ENCODE measurements at regions of chr15 and their contacts with region 1.

Region 1: GRCh38 chr15:42920519-42921227 is at the start of gene TTBK2:
- DNase-seq: peak; percentile 98
- H3K4me3 Mint-ChIP-seq: peak within 1 kb of the TSS; percentile 99
- H3K27ac Mint-ChIP-seq: peak within 1 kb of the TSS; percentile 92
- H3K4me1 Mint-ChIP-seq: peaks cover 22% of the 10 kb centered on the region
- H3K27me3 Mint-ChIP-seq: no peaks in the 10 kb centered on the region
- total RNA-seq, gene TTBK2: 13.5 to 15.7 TPM

Region 2: DNA sequence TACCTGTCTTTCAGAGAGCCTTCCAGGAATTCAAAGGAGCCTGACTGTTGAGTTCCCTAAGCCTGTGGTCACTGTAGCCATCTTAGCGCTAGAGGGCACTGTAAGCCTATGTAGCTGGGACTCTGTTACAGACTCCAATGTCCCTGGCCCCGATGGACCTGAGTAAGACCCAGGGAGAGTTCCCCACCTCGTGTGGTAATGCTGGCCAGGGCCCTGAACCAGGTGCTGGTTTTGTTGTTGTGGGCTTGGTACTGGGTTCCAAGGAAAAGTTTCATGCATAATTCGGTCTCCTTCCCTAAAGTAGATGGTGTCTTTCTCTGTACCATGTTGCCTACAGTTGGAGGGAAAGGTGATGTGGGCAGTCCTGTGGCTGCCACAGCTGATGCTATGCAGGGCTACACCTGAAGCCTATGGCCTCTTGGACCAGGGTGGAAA is 216.2 kb before region 1 on chr15:
- CTCF ChIA-PET with region 1: interaction called, 8 read pairs
- intact Hi-C with region 1: loop called (anchors 1 kb)
- DNase-seq: peak; percentile 81
- H3K4me3 Mint-ChIP-seq: no peak overlapping the region
- H3K27ac Mint-ChIP-seq: no peak overlapping the region
- H3K4me1 Mint-ChIP-seq: peaks cover 6% of the 10 kb centered on the region
- H3K27me3 Mint-ChIP-seq: no peaks in the 10 kb centered on the region

Region 3: DNA sequence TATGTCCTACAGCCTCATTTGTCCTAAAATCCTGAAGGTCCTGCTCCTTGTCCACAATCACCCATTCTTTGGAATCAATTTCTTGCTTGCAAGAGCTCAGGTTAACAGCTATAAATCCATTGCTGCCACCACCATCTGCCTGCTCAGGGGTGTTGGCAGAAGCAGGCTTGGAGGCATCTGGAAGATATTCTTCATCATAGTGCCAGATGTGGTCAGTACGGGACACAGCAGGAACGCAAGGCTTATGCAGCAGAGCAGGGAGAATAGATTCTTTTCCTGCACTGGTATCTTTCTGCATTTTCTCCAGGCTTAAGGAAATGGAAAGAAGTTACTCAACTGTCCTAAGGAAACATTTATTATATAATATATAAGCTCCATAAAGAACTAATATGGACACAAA is 145.3 kb before region 1 on chr15:
- CTCF ChIA-PET with region 1: interaction called, 11 read pairs
- intact Hi-C with region 1: no loop called
- DNase-seq: no peak
- H3K4me3 Mint-ChIP-seq: no peak overlapping the region
- H3K27ac Mint-ChIP-seq: no peak overlapping the region
- H3K4me1 Mint-ChIP-seq: no peaks in the 10 kb centered on the region
- H3K27me3 Mint-ChIP-seq: no peaks in the 10 kb centered on the region

Region 4: DNA sequence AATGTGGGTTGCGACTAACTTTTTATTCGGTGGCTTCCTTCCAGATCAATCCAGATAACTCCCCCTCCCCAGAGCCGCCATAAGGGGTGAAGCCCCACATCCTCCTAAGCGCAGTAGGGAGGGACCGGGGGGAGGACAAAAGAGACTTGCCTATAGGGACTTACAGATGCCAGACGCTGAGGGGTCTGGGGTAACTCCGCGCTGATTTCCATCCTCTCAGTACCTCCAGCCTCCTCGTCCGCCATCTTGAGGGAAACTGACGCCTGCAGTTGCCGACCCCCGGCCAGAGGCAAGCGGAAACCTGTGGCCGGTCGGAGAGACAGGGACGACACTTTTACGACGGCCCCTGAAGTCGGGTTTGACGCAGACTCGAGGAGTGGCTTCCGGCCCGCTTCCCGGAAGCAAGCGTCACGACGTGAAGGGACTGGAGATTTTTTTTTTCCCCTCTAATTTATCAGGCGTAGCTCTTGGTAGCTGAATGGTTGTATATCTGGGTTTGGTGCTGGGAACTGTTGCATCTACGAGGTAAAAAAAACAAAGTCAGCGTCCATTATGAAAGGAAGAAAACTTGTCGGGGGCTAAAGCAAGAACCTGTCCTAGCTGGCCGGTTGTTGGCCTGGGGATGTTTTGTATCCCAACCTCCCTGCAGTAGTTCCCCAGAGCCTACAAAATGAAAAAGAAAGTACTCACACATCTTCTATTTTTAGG is 185.3 kb after region 1 on chr15 and contains the start of gene UBR1:
- CTCF ChIA-PET with region 1: no interaction called
- intact Hi-C with region 1: loop called (anchors 5 kb)
- DNase-seq: peak; percentile 95
- H3K4me3 Mint-ChIP-seq: peak within 1 kb of the TSS; percentile 95
- H3K27ac Mint-ChIP-seq: peak within 1 kb of the TSS; percentile 95
- H3K4me1 Mint-ChIP-seq: peaks cover 39% of the 10 kb centered on the region
- H3K27me3 Mint-ChIP-seq: no peaks in the 10 kb centered on the region
- total RNA-seq, gene UBR1: 25.2 to 25.9 TPM

Region 5: DNA sequence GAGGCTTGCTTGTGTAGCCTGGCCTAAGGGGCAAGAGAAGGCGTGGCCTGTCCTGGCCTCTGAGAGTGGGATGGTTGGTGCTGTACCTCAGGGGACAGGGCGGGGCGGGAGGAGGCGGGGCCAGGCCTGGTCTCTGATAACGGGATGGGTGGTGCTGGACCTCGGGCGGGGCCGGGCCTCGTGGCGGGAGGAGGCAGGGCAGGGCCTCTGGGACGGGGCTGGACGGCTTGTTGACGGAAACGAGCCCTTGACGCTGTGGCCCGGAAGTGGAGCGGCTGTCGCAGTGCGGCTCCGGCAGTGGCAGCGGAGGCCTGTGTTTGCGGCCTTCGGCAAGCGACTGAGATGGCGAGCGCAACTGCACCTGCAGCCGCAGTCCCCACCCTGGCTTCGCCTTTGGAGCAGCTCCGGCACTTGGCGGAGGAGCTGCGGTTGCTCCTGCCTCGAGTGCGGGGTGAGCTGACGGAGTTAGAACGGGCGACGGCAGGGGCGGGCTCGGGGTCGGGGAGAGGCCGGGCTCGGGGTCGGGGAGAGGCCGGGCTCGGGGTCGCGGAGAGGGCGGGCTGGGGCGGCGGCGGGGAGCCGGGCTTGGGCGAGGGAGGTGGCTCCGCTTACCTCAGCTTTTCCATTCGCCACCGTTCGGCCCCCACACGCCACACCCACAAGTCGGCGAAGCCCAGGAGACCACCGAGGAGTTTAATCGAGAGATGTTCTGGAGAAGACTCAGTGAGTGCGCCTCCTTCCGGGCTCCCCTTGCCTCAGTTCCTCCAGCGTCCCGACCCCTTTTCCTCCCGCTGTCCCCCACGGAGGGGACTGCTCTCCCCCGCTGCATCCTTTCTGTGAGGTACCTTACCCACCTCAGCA is 264.7 kb after region 1 on chr15 and contains the start of gene CCNDBP1:
- CTCF ChIA-PET with region 1: no interaction called
- intact Hi-C with region 1: loop called (anchors 1 kb)
- DNase-seq: peak; percentile 94
- H3K4me3 Mint-ChIP-seq: peak within 1 kb of the TSS; percentile 93
- H3K27ac Mint-ChIP-seq: peak within 1 kb of the TSS; percentile 91
- H3K4me1 Mint-ChIP-seq: peaks cover 15% of the 10 kb centered on the region
- H3K27me3 Mint-ChIP-seq: no peaks in the 10 kb centered on the region
- total RNA-seq, gene CCNDBP1: 54.6 to 62.1 TPM

Region 6: DNA sequence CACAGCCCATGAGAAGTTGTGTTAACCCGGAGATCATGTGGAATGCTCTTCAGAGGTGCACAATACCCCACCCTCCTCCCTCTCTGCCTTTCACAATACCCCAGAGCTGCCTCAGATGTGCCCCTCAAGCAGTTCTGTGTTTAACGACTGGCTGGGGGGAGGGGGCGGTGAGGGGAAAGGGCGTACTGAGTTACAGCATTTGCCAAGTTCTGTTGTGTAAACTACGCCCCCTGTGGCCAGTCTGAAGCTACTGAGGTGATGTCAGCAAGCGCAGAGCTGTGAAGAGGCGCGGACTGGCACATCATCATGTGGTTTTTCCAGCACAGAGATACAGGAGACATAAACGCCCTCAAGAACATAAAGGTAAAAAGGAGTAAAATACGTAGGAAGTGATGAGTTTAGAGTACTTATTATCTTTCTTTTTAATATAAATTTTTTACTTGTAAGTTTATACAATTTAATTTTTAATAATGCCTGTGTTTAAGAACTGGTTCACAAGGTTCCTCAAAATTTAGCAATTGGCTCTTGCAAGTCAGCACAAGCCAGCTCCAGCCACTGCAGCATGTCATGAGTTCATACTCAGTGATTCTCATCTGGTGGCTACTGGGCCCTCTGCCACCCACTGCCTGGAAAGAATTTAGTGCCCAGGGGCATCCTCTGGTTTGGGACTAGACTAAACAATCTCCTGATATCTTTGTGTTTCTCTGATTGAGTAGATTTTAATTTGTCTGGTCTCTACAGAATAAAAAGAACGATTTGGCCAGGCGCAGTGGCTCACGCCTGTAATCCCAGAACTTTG is 298.4 kb after region 1 on chr15:
- CTCF ChIA-PET with region 1: no interaction called
- intact Hi-C with region 1: no loop called
- DNase-seq: peak; percentile 37
- H3K4me3 Mint-ChIP-seq: no peak overlapping the region
- H3K27ac Mint-ChIP-seq: no peak overlapping the region
- H3K4me1 Mint-ChIP-seq: no peaks in the 10 kb centered on the region
- H3K27me3 Mint-ChIP-seq: peaks cover 5% of the 10 kb centered on the region